ENCODE measurements at regions of chr19 and their contacts with region 1.

Region 1: GRCh38 chr19:5031231-5032100 is 62.6 kb downstream of the KDM4B start:
- DNase-seq: peak; percentile 71 to 78 (median 71)
- H3K4me3 ChIP-seq: no peak overlapping the region
- H3K27ac ChIP-seq: no peak overlapping the region
- H3K4me1 ChIP-seq: peaks cover 0 to 7% (median 5%) of the 10 kb centered on the region in 4 experiments
- H3K27me3 ChIP-seq: no peaks in the 10 kb centered on the region

Region 2: GRCh38 chr19:5001615-5002014 is 29.9 kb before region 1 on chr19:
- CTCF ChIA-PET with region 1: interaction called, 13 read pairs
- POLR2A ChIA-PET with region 1: no interaction called
- DNase-seq: peak; percentile 51 to 73 (median 70)
- H3K4me3 ChIP-seq: no peak overlapping the region
- H3K27ac ChIP-seq: no peak overlapping the region
- H3K4me1 ChIP-seq: peaks cover 0 to 2% (median under 1%) of the 10 kb centered on the region in 4 experiments
- H3K27me3 ChIP-seq: no peaks in the 10 kb centered on the region

Region 3: GRCh38 chr19:5013761-5014160 is 17.7 kb before region 1 on chr19:
- CTCF ChIA-PET with region 1: interaction called, 12 read pairs
- POLR2A ChIA-PET with region 1: interaction called, 3 read pairs
- DNase-seq: no peak
- H3K4me3 ChIP-seq: no peak overlapping the region
- H3K27ac ChIP-seq: no peak overlapping the region
- H3K4me1 ChIP-seq: peaks cover 0 to 10% (median 4%) of the 10 kb centered on the region in 4 experiments
- H3K27me3 ChIP-seq: no peaks in the 10 kb centered on the region